Activated B cell treated with CpG ODN at 0.5 μM for 24 hours (primary cell): ENCODE measurements at regions of chr4 and their contacts with region 1.

Region 1: GRCh38 chr4:122980860-122981259 is 58.5 kb upstream of the NUDT6 start:
- DNase-seq: no peak
- ATAC-seq: no peak
- H3K4me3 Mint-ChIP-seq: no peak overlapping the region
- H3K27ac Mint-ChIP-seq: no peak overlapping the region
- H3K4me1 Mint-ChIP-seq: no peaks in the 10 kb centered on the region
- H3K27me3 Mint-ChIP-seq: no peaks in the 10 kb centered on the region
- CTCF ChIP-seq: no peak

Region 2: GRCh38 chr4:122997463-122998101 is 16.7 kb after region 1 on chr4:
- CTCF ChIA-PET with region 1: no interaction called
- POLR2A ChIA-PET with region 1: interaction called, 13 read pairs
- intact Hi-C with region 1: no loop called
- DNase-seq: no peak
- ATAC-seq: no peak
- H3K4me3 Mint-ChIP-seq: no peak overlapping the region
- H3K27ac Mint-ChIP-seq: no peak overlapping the region
- H3K4me1 Mint-ChIP-seq: peaks cover 1% of the 10 kb centered on the region
- H3K27me3 Mint-ChIP-seq: no peaks in the 10 kb centered on the region
- CTCF ChIP-seq: no peak